Mammary epithelial cell (primary cell): ENCODE measurements at regions of chr4 and their contacts with region 1.

Region 1: DNA sequence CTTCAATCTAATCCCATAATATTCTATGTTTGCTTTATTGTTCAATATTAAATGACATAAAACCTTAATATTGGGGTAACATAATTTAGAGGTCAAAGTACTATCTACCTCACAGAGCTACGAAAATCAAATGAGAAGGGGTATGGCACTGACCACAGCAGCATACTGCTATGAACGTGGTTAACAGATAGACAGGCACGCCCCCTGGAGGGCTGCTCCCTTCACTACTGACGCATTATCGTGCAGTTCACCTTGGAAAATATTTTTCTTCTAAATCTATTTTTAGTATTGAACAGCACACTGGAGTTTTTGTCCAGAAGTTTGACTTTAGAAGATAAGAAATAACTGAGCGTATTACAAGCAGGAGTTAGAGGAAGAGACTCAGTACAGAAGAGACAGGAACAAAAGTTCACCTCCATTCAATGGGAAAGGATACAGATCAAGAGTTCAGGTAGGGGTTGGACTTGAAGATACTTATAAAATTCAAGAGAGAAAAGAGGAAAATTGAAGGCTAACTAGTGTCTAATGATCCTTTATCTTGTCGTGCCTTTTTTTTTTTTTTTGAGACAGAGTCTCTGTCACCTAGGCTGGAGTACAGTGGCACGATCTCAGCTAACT is 22.7 kb downstream of the MAP9 start:
- DNase-seq: peak; percentile 14
- H3K4me3 ChIP-seq: no peak overlapping the region
- H3K27ac ChIP-seq: no peak overlapping the region
- H3K4me1 ChIP-seq: no peaks in the 10 kb centered on the region
- H3K27me3 ChIP-seq: no peaks in the 10 kb centered on the region
- CTCF ChIP-seq: peak; percentile 80 to 86

Region 2: GRCh38 chr4:154982187-154983047 is 371.6 kb before region 1 on chr4:
- CTCF ChIA-PET with region 1: no interaction called
- dilution Hi-C with region 1: no loop called
- in situ Hi-C with region 1: loop called in 1 of 2 experiments (anchors 25 kb)
- intact Hi-C with region 1: loop called (anchors 1 kb)
- DNase-seq: peak; percentile 44
- H3K4me3 ChIP-seq: no peak overlapping the region
- H3K27ac ChIP-seq: no peak overlapping the region
- H3K4me1 ChIP-seq: no peaks in the 10 kb centered on the region
- H3K27me3 ChIP-seq: no peaks in the 10 kb centered on the region
- CTCF ChIP-seq: peak; percentile 77 to 84

Region 3: GRCh38 chr4:155025762-155026457 is 328.1 kb before region 1 on chr4:
- CTCF ChIA-PET with region 1: no interaction called
- dilution Hi-C with region 1: no loop called
- in situ Hi-C with region 1: no loop called
- intact Hi-C with region 1: loop called (anchors 5 kb)
- DNase-seq: peak; percentile 36
- H3K4me3 ChIP-seq: no peak overlapping the region
- H3K27ac ChIP-seq: no peak overlapping the region
- H3K4me1 ChIP-seq: no peaks in the 10 kb centered on the region
- H3K27me3 ChIP-seq: no peaks in the 10 kb centered on the region
- CTCF ChIP-seq: peak; percentile 43 to 64

Region 4: DNA sequence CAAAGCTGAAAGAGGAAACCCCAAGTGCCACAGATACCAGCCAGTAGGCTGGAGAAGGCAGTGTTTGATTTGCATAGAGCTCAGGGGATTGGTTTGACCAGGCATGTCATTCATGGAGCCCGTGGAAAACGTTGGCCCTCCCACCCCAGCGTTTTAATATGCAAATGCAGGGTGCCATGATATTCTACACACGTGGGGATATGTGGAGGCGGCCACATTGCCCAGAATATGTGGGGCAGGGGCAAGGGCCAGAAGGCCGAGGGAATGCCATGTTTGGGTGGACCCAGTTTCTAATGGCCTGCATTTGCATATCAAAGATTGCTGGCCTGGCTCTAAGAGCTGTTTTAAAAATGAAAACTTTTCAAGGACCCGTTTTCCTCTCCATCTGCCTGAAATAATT is 48.4 kb before region 1 on chr4:
- CTCF ChIA-PET with region 1: interaction called, 3 read pairs
- dilution Hi-C with region 1: no loop called
- in situ Hi-C with region 1: no loop called
- intact Hi-C with region 1: loop called (anchors 1 kb)
- DNase-seq: no peak
- H3K4me3 ChIP-seq: no peak overlapping the region
- H3K27ac ChIP-seq: no peak overlapping the region
- H3K4me1 ChIP-seq: no peaks in the 10 kb centered on the region
- H3K27me3 ChIP-seq: no peaks in the 10 kb centered on the region
- CTCF ChIP-seq: no peak